Activated CD8-positive, alpha-beta T cell treated with anti-CD3 and anti-CD28 coated beads, Interleukin-2, amount 10 ng/mL, durations not matched to agents 7 days and 5 days (primary cell): ENCODE measurements at regions of chr7 and their contacts with region 1.

Region 1: DNA sequence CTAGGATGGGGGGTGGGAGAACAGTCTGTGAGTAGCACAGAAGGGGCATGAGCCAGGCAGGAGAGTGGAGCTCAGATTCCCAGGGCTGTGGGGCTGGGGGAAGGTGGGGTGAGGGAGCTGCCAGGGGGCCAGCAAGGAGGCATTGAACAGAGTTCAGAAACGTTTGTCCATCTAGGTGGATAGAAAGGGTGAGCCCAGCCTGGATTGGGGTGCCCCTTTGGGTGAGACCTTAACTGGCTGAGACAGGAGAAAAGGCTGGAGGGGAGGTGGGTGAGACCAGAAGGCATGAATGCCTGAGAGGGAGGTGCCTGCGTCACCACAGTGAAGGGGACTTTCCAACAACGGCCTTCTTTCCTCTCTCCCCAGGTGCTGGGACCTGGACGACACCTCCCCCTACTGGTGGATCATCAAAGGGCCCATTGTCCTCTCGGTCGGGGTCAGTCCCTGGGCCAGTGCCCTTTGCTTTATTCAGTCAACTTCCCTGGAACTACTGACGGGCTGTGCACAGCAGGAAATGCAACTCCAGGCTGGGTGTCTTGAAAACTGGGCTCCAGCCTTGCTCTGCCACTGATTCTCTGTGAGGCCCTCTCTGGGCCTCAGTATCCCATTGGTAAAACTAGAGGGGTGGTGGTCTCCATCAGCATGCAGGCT is 11.0 kb downstream of the GHRHR start:
- DNase-seq: peak; percentile 64
- ATAC-seq: peak; percentile 83
- H3K4me3 Mint-ChIP-seq: no peak overlapping the region
- H3K27ac Mint-ChIP-seq: no peak overlapping the region
- H3K4me1 Mint-ChIP-seq: peaks cover 5% of the 10 kb centered on the region
- H3K27me3 Mint-ChIP-seq: peaks cover 22% of the 10 kb centered on the region

Region 2: DNA sequence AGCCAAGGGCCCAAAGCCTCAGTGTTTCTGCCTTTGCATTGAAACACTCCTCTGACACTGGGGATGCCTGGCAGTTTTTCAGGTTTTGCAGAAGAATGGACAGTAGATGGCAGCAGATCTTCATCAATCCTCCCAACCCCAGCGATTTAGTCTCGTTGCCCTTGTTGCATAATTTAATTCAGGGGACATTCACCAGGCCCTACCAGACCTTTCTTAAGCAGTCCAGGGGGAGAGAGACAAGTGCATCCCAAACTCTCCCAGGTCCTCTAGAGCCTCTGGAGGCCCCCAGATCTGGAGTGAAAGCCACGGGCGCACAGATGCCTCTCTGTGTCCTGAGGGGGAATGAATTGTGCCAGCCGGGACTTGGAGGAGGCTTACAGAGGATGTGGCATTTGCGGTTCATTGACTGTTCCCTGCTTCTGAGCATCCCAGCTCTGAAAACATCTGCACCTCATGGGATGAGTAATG is 173.9 kb before region 1 on chr7:
- CTCF ChIA-PET with region 1: interaction called, 16 read pairs
- POLR2A ChIA-PET with region 1: no interaction called
- DNase-seq: peak; percentile 57
- ATAC-seq: peak; percentile 59
- H3K4me3 Mint-ChIP-seq: no peak overlapping the region
- H3K27ac Mint-ChIP-seq: no peak overlapping the region
- H3K4me1 Mint-ChIP-seq: peaks cover 24% of the 10 kb centered on the region
- H3K27me3 Mint-ChIP-seq: no peaks in the 10 kb centered on the region

Region 3: DNA sequence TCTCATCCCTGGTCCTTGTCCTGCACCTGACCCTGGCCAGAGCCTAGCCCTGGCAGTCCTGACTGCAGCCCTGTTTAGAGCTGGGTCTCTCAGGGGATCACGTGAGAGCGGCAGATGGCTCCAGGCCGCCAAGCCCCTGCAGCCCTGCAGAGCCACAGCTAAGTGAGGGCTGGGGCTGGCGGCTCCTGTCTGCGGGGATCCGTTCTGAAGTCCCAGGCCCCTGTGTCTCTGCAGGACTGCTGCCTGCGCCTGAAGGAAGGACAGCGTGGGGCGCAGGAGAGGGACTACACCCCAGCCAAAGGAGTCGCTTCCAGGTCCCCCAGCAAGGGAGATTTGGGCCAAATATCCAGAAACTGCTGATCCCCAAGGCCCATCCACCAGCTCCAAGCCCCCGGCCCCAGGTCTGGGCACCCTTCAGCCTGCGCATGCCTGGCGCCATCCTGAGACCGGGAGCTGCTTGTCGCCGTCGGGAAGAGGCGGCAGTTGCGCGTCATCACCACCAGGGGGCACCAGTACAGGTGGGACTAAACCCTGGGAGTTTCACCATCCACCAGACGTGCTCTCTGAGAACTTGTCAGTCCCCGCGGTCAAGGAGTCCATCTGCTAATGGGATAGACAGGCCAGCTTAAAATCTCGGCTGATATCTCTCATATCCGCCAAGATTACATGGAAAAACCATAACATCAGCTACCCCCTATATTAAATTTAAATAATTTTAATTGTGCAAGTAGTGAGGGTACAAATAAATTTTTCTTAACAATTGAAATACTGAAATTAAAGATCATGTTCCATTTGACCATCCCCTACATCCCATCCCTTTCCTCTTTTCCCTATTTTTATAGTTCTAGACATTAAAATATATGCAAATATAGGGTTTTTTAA is 36.1 kb before region 1 on chr7:
- CTCF ChIA-PET with region 1: interaction called, 54 read pairs
- POLR2A ChIA-PET with region 1: no interaction called
- DNase-seq: peak; percentile 72
- ATAC-seq: peak; percentile 81
- H3K4me3 Mint-ChIP-seq: no peak overlapping the region
- H3K27ac Mint-ChIP-seq: no peak overlapping the region
- H3K4me1 Mint-ChIP-seq: no peaks in the 10 kb centered on the region
- H3K27me3 Mint-ChIP-seq: peaks cover 27% of the 10 kb centered on the region

Region 4: DNA sequence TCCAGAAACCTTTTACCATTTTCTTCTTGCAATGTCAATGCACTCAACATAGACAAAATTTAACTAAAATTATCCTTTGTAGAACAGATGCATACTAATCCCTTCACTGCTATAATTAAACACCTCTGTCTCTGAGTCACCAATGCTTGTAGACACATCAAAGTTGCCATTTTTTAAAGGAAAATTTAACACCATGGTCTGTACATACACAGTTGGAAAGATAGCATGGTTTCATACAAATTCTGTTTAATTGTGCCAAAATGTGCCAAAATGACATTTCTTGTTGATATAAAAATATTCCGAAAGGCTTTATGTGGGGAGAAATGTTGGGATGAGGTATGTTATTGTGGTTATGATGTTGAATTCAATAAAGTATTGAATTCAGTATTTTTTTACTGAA is 240.0 kb after region 1 on chr7:
- CTCF ChIA-PET with region 1: no interaction called
- POLR2A ChIA-PET with region 1: no interaction called
- DNase-seq: no peak
- ATAC-seq: no peak
- H3K4me3 Mint-ChIP-seq: no peak overlapping the region
- H3K27ac Mint-ChIP-seq: no peak overlapping the region
- H3K4me1 Mint-ChIP-seq: no peaks in the 10 kb centered on the region
- H3K27me3 Mint-ChIP-seq: no peaks in the 10 kb centered on the region